CD4-positive, alpha-beta T cell (primary cell): ENCODE measurements at regions of chr12 and their contacts with region 1.

Region 1: DNA sequence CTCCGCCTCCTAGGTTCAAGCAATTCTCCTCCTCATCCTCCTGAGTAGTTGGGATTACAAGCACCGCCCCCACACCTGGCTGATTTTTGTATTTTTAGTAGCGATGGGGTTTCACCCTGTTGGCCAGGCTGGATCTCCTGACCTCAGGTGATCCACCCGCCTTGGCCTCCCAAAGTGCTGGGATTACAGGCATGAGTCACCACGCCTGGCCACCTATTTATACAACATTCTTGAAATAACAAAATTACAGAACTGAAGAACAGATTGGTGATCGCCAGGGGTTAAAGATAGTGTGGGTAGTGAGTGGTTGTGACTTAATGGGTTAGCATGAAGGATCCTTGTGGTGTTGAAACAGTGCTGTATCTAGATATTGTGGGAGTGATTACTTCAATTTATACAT is 7.4 kb downstream of the GLIPR1L1 start:
- DNase-seq: no peak
- ATAC-seq: no peak
- H3K4me3 ChIP-seq: no peak overlapping the region
- H3K4me3 Mint-ChIP-seq: no peak overlapping the region
- H3K27ac ChIP-seq: no peak overlapping the region
- H3K27ac Mint-ChIP-seq: no peak overlapping the region
- H3K4me1 ChIP-seq: no peaks in the 10 kb centered on the region
- H3K4me1 Mint-ChIP-seq: no peaks in the 10 kb centered on the region
- H3K27me3 ChIP-seq: no peaks in the 10 kb centered on the region
- H3K27me3 Mint-ChIP-seq: peaks cover 14% of the 10 kb centered on the region
- CTCF ChIP-seq: no peak

Region 2: DNA sequence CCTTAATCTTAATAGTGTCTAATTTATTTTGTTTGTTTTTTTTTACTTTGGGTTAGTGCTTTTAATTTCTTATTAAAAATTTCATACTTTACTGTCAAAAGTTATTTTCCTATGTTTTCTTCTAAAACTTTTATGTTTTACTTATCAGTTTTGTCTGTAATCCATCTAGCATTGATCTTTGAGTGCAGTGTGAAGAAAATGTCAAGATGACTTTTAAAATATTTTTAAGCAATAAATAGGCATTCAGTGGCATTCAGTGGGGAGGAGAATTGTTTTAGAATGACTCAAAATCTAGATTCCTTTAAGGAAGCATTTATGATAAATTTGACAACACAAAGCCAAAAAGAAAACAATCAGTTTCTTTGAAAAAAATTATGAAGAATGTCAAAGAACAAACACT is 479.3 kb before region 1 on chr12:
- CTCF ChIA-PET with region 1: no interaction called
- POLR2A ChIA-PET with region 1: no interaction called
- intact Hi-C with region 1: no loop called
- DNase-seq: no peak
- ATAC-seq: no peak
- H3K4me3 ChIP-seq: no peak overlapping the region
- H3K4me3 Mint-ChIP-seq: no peak overlapping the region
- H3K27ac ChIP-seq: no peak overlapping the region
- H3K27ac Mint-ChIP-seq: no peak overlapping the region
- H3K4me1 ChIP-seq: no peaks in the 10 kb centered on the region
- H3K4me1 Mint-ChIP-seq: no peaks in the 10 kb centered on the region
- H3K27me3 ChIP-seq: no peaks in the 10 kb centered on the region
- H3K27me3 Mint-ChIP-seq: no peaks in the 10 kb centered on the region
- CTCF ChIP-seq: no peak

Region 3: DNA sequence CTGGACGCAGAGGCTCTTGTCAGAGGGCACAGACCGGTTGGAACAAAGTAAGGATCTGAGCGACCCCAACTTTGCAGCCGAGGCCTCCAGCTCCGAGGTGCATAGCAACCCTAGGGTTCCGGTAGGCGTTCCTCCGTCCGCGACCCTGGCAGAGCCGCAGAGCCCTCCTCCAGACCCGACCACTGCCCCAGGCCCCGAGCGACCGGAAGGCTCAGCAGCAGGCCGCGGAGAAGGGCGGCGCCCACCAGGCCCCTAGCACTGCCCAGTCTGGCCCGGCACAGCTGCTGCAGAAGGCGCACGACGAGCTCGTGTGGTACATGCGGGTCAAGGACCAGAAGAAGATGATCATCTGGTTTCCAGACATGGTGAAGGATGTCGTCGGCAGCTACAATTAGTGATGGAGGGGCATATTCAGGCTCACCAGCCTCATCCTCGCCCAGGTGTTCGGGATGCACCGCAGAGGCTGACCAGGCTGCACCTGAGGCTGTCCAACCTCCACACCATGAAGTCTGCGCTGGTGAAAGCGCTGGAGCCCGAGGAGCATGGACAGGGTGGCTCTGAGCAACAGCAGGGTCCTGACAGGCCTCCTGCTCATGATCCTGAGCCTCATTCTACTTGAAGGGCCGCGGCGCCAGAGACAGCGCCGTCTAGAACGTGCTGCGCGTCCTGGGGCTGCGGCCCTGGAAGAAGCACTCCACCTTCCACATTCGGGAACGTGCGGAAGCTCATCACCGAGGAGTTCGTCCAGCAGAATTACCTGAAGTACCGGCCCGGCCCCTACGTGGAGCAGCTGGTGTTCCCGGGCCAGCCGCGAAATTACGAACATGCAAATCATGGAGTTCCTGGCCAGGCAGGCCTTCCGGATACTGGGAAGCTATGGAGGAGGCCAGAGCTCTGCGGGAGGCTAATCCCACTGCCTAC is 36.2 kb before region 1 on chr12:
- CTCF ChIA-PET with region 1: no interaction called
- POLR2A ChIA-PET with region 1: no interaction called
- intact Hi-C with region 1: loop called in 1 of 2 experiments (anchors 2 kb)
- DNase-seq: no peak
- ATAC-seq: no peak
- H3K4me3 ChIP-seq: no peak overlapping the region
- H3K4me3 Mint-ChIP-seq: no peak overlapping the region
- H3K27ac ChIP-seq: no peak overlapping the region
- H3K27ac Mint-ChIP-seq: no peak overlapping the region
- H3K4me1 ChIP-seq: no peaks in the 10 kb centered on the region
- H3K4me1 Mint-ChIP-seq: no peaks in the 10 kb centered on the region
- H3K27me3 ChIP-seq: no peaks in the 10 kb centered on the region
- H3K27me3 Mint-ChIP-seq: no peaks in the 10 kb centered on the region
- CTCF ChIP-seq: no peak